Activated CD4-positive, alpha-beta T cell treated with anti-CD3 and anti-CD28 coated beads, Interleukin-2, amount 10 ng/mL, durations not matched to agents 7 days and 5 days (primary cell): ENCODE measurements at regions of chr19 and their contacts with region 1.

Region 1: GRCh38 chr19:1026189-1027019 is at the start of gene CNN2:
- DNase-seq: peak; percentile 73
- H3K4me3 Mint-ChIP-seq: peak within 1 kb of the TSS; percentile 98
- H3K27ac Mint-ChIP-seq: peak within 1 kb of the TSS; percentile 93
- H3K4me1 Mint-ChIP-seq: peaks cover 26% of the 10 kb centered on the region
- H3K27me3 Mint-ChIP-seq: no peaks in the 10 kb centered on the region
- total RNA-seq, gene CNN2: 558 to 580 TPM

Region 2: GRCh38 chr19:1039646-1040475 is 13.5 kb after region 1 on chr19 and contains the start of gene ABCA7:
- CTCF ChIA-PET with region 1: interaction called, 15 read pairs
- POLR2A ChIA-PET with region 1: interaction called, 3 read pairs
- DNase-seq: peak; percentile 99
- H3K4me3 Mint-ChIP-seq: peak within 1 kb of the TSS; percentile 99
- H3K27ac Mint-ChIP-seq: peak within 1 kb of the TSS; percentile 91
- H3K4me1 Mint-ChIP-seq: peaks cover 64% of the 10 kb centered on the region
- H3K27me3 Mint-ChIP-seq: no peaks in the 10 kb centered on the region
- total RNA-seq, gene ABCA7: 75.9 to 87.5 TPM

Region 3: DNA sequence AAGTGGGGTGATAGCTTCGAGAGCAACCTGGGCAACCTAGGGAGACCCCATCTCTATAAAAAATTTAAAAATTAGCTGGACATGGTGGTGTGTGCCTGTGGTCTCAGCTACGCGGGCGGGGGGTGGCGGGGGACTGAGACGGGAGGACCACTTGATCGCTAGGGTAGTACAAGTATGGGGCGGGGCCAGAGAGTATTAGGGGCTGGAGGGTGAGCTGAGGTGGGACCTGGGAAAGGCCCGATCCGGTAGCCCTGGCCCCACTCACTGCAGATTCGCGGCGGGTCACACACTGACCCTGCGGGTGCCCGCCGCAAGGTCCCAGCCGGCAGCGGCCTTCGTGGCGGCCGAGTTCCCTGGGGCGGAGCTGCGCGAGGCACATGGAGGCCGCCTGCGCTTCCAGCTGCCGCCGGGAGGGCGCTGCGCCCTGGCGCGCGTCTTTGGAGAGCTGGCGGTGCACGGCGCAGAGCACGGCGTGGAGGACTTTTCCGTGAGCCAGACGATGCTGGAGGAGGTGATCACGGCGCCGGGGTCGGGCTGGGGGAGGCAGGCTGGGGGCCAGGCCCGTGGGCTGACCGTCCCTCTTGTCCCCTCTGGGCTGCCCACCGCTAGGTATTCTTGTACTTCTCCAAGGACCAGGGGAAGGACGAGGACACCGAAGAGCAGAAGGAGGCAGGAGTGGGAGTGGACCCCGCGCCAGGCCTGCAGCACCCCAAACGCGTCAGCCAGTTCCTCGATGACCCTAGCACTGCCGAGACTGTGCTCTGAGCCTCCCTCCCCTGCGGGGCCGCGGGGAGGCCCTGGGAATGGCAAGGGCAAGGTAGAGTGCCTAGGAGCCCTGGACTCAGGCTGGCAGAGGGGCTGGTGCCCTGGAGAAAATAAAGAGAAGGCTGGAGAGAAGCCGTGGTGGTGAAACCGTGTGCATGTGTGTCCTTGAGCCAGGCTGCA is 38.5 kb after region 1 on chr19:
- CTCF ChIA-PET with region 1: interaction called, 12 read pairs
- POLR2A ChIA-PET with region 1: no interaction called
- DNase-seq: peak; percentile 70
- H3K4me3 Mint-ChIP-seq: peak overlapping the region; percentile 55
- H3K27ac Mint-ChIP-seq: peak overlapping the region; percentile 62
- H3K4me1 Mint-ChIP-seq: peaks cover 39% of the 10 kb centered on the region
- H3K27me3 Mint-ChIP-seq: no peaks in the 10 kb centered on the region